K562 (cell line): ENCODE measurements at regions of chr12 and their contacts with region 1.

Region 1: GRCh38 chr12:121793838-121794533 is 498 bp upstream of the RHOF start:
- DNase-seq: peak; percentile 86 to 97 (median 90)
- ATAC-seq: peak; percentile 82
- H3K4me3 ChIP-seq: peak overlapping the region; percentile 57
- H3K27ac ChIP-seq: peak overlapping the region; percentile 81
- H3K4me1 ChIP-seq: peaks cover 35 to 81% of the 10 kb centered on the region in 2 experiments
- H3K27me3 ChIP-seq: no peaks in the 10 kb centered on the region
- CTCF ChIP-seq: peak; percentile 100
- EP300 ChIP-seq: no peak; the same call in 1 of the 2 replicates
- POLR2A ChIP-seq: 0 out of 2 replicates have a peak, but pooled peaks have one; percentile 5
- RAD21 ChIP-seq: peak; percentile 98

Region 2: DNA sequence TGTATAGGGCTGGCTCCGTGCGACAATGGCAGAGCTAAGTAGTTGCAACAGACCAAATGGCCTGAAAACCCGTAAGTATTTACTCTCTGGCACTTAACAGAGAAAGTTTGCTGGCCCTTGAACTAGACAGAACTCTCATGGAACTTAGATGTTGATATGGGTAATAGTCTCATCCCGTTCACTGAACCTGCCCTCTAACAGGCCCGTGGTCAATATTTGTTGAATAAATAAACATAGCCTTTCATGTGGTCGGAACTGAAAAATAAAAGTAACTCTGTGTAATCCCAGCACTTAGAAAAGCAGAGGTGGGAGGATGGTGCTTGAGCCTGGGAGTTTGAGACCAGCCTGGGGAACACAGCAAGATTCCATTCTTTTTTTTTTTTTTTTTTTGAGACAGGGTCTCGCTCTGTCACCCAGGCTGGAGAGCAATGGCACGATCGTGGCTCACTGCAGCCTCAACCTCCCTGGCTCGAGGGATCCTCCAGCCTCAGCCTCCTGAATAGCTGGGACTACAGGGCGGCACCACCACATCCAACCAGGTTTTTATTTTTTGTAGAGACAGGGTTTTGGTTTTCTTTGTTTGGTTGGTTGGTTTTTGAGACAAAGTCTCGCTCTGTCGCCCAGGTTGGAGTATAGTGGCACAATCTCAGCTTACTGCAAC is 242.9 kb before region 1 on chr12:
- CTCF ChIA-PET with region 1: interaction called, 4 read pairs
- POLR2A ChIA-PET with region 1: interaction called, 4 read pairs
- in situ Hi-C with region 1: loop called (anchors 5 kb)
- intact Hi-C with region 1: loop called (anchors 5 kb)
- DNase-seq: no peak
- ATAC-seq: no peak
- H3K4me3 ChIP-seq: no peak overlapping the region
- H3K27ac ChIP-seq: no peak overlapping the region
- H3K4me1 ChIP-seq: peaks cover 0 to 7% of the 10 kb centered on the region in 2 experiments; a peak in 1 of 5 replicates
- H3K27me3 ChIP-seq: no peaks in the 10 kb centered on the region
- CTCF ChIP-seq: no peak
- EP300 ChIP-seq: no peak
- POLR2A ChIP-seq: no peak
- RAD21 ChIP-seq: no peak

Region 3: GRCh38 chr12:121712461-121713256 is 81.3 kb before region 1 on chr12 and contains the start of gene TMEM120B:
- CTCF ChIA-PET with region 1: no interaction called
- POLR2A ChIA-PET with region 1: interaction called, 10 read pairs
- in situ Hi-C with region 1: no loop called
- intact Hi-C with region 1: no loop called
- DNase-seq: peak; percentile 87 to 97 (median 94)
- ATAC-seq: peak; percentile 76
- H3K4me3 ChIP-seq: peak within 1 kb of the TSS; percentile 96
- H3K27ac ChIP-seq: peak within 1 kb of the TSS; percentile 78
- H3K4me1 ChIP-seq: peaks cover 30 to 33% of the 10 kb centered on the region in 2 experiments
- H3K27me3 ChIP-seq: no peaks in the 10 kb centered on the region
- CTCF ChIP-seq: no peak; a peak in 1 of 6 replicates
- EP300 ChIP-seq: no peak
- POLR2A ChIP-seq: peak; percentile 90
- RAD21 ChIP-seq: no peak
- polyA plus RNA-seq, gene TMEM120B: 1.7 to 3.8 TPM

Region 4: GRCh38 chr12:121811434-121812319 is 17.7 kb after region 1 on chr12:
- CTCF ChIA-PET with region 1: interaction called, 73 read pairs
- POLR2A ChIA-PET with region 1: interaction called, 194 read pairs
- in situ Hi-C with region 1: no loop called
- intact Hi-C with region 1: loop called (anchors 1 kb)
- DNase-seq: peak; percentile 75 to 85 (median 82)
- ATAC-seq: peak; percentile 94
- H3K4me3 ChIP-seq: peak overlapping the region; percentile 53
- H3K27ac ChIP-seq: peak overlapping the region; percentile 31
- H3K4me1 ChIP-seq: peaks cover 27 to 59% of the 10 kb centered on the region in 2 experiments
- H3K27me3 ChIP-seq: no peaks in the 10 kb centered on the region
- CTCF ChIP-seq: peak; percentile 86 to 97 (median 91)
- EP300 ChIP-seq: no peak
- POLR2A ChIP-seq: no peak
- RAD21 ChIP-seq: peak; percentile 92 to 93

Region 5: DNA sequence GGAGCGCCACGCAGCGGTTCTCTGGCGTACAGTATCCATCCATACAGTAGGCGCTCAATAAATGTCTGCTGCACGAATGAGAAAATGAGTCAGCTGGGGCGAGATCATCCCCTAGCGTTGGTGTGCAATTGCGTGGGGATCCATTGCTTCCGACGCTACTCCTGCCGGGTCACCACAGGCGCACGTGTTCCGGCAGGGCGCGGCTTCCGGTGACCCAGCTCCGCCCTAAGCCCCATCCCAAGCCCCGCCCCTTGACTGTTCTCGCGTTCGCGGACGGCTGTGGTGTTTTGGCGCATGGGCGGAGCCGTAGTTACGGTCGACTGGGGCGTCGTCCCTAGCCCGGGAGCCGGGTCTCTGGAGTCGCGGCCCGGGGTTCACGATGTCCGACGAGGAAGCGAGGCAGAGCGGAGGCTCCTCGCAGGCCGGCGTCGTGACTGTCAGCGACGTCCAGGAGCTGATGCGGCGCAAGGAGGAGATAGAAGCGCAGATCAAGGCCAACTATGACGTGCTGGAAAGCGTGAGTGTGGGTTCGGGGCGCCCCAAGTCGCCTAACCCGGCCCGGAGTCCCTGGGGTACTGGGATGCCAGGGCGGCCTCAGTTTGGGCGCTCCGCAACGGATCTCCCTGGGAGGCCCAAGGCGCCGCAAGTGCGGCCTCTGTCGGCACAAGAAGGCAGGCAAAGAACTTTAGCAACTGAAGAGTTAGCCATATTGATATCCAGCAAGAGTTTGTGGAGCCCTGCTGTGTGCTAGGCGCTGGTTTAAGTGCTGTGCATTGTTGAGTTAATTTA is 94.7 kb after region 1 on chr12 and contains the start of gene PSMD9:
- CTCF ChIA-PET with region 1: interaction called, 50 read pairs
- POLR2A ChIA-PET with region 1: interaction called, 16 read pairs
- in situ Hi-C with region 1: loop called (anchors 5 kb)
- intact Hi-C with region 1: loop called (anchors 1 kb)
- DNase-seq: peak; percentile 96 to 99 (median 97)
- ATAC-seq: peak; percentile 93
- H3K4me3 ChIP-seq: peak within 1 kb of the TSS; percentile 74
- H3K27ac ChIP-seq: peak within 1 kb of the TSS; percentile 92
- H3K4me1 ChIP-seq: peaks cover 25 to 28% of the 10 kb centered on the region in 2 experiments
- H3K27me3 ChIP-seq: no peaks in the 10 kb centered on the region
- CTCF ChIP-seq: peak; percentile 84 to 89 (median 88)
- EP300 ChIP-seq: peak; percentile 82
- POLR2A ChIP-seq: peak; percentile 94
- RAD21 ChIP-seq: peak; percentile 71 to 90
- polyA plus RNA-seq, gene PSMD9: 12.2 to 22.8 TPM

Region 6: DNA sequence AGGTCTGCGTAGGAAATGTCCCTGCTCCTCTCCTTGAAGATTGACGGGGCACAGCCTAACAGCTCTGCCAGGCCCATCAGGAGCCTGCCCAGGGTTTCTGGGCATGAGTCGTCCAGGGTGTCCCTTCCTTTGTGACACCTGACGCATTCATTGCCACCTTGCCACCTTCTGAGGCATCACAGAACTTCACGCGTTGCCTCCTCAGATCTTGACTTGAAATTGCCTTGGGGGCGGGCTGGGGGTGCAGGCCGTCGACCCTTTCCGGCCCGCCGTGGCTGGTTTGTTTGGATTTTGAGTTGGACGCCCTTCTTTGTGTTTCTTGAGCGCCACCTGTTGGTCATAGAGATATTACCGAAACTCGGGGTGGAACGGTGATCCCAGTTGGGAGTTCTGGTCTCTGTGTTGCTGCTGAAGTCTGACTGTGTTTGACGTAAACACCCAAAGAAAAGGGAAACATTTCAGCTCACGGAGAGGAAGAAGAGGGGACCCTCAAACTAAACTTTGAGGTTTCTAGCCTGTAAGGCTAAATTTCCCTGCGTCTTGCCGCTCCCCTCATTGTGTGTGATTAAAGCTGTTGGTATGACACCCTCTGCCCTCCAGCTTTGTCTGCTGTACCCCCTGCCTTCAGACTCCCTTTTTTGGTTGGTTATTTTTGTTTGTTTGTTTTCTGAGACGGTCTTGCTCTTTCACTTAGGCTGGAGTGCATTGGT is 329.2 kb after region 1 on chr12:
- CTCF ChIA-PET with region 1: interaction called, 13 read pairs
- POLR2A ChIA-PET with region 1: no interaction called
- in situ Hi-C with region 1: no loop called
- intact Hi-C with region 1: no loop called
- DNase-seq: peak; percentile 74 to 84 (median 77)
- ATAC-seq: peak; percentile 89
- H3K4me3 ChIP-seq: no peak overlapping the region
- H3K27ac ChIP-seq: peak overlapping the region; percentile 59; the same call in 2 of the 3 replicates
- H3K4me1 ChIP-seq: peaks cover 9 to 19% of the 10 kb centered on the region in 2 experiments; a peak in 4 of 5 replicates
- H3K27me3 ChIP-seq: no peaks in the 10 kb centered on the region
- CTCF ChIP-seq: peak; percentile 82 to 85 (median 85)
- EP300 ChIP-seq: no peak
- POLR2A ChIP-seq: no peak
- RAD21 ChIP-seq: peak; percentile 83 to 89

Region 7: GRCh38 chr12:122159882-122160281 is 365.9 kb after region 1 on chr12:
- CTCF ChIA-PET with region 1: no interaction called
- POLR2A ChIA-PET with region 1: no interaction called
- in situ Hi-C with region 1: no loop called
- intact Hi-C with region 1: no loop called
- DNase-seq: peak in 2 of 4 experiments; percentile 58 to 67
- ATAC-seq: peak; percentile 85
- H3K4me3 ChIP-seq: no peak overlapping the region
- H3K27ac ChIP-seq: no peak overlapping the region
- H3K4me1 ChIP-seq: peaks cover 8 to 10% of the 10 kb centered on the region in 2 experiments; a peak in 4 of 5 replicates
- H3K27me3 ChIP-seq: peaks cover 2 to 5% of the 10 kb centered on the region in 2 experiments; a peak in 2 of 5 replicates
- CTCF ChIP-seq: peak; percentile 31 to 57 (median 40); a peak in 5 of 6 replicates
- EP300 ChIP-seq: no peak
- POLR2A ChIP-seq: no peak
- RAD21 ChIP-seq: peak; percentile 16 to 67; a peak in 3 of 4 replicates